Natural killer cell (primary cell): ENCODE measurements at regions of chr21 and their contacts with region 1.

Region 1: DNA sequence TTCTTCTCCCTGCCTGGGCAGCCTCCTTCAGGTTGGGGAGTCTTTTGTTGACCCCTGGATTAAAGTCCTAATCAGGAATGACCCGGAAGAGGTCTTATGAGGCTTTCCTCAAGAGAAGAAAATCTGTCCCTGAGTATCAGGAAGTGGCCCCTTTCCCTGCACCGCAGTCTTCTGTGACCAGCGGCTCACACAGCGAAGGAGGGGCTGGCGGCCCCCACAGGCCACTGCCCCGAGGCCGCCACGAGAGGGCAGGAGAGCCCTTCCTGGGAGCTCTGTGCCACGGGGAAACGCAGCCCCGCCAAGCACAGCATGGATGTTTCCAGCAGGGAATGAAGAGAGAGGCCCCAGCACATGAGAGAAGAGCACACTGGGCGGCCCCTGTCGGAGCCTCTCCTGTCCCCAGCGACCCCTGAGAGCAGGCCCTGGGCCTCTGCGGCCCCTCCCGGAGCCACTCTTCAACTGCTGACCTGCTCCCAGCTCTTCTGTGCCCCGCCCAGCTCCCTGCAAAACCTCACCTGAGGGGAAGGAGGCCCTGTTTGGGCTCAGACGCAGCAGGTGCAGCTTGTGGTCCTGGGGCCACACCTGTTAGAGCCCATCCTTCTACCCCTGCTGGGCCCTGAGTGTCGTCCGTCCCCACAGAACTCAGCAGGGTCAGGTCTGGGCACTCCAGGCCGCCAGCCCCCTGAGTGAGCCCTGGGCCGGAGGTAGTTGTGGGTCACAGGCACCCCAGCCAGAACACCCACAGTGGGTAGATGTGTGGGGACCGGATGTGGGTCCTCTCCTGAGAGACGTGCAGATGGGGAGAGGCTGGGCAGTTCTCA is 4.9 kb upstream of the POFUT2 start:
- DNase-seq: peak; percentile 65 to 84
- ATAC-seq: peak; percentile 65 to 70 (median 67)
- H3K4me3 ChIP-seq: no peak overlapping the region
- H3K4me3 Mint-ChIP-seq: peak overlapping the region; percentile 64
- H3K27ac ChIP-seq: no peak overlapping the region
- H3K27ac Mint-ChIP-seq: peak overlapping the region in 1 of 2 donors; percentile 72
- H3K4me1 ChIP-seq: peaks cover 27% of the 10 kb centered on the region
- H3K4me1 Mint-ChIP-seq: peaks cover 11 to 16% of the 10 kb centered on the region in 2 donors
- H3K27me3 ChIP-seq: no peaks in the 10 kb centered on the region
- H3K27me3 Mint-ChIP-seq: peaks cover 20 to 21% of the 10 kb centered on the region in 2 donors
- CTCF ChIP-seq: peak; percentile 95

Region 2: DNA sequence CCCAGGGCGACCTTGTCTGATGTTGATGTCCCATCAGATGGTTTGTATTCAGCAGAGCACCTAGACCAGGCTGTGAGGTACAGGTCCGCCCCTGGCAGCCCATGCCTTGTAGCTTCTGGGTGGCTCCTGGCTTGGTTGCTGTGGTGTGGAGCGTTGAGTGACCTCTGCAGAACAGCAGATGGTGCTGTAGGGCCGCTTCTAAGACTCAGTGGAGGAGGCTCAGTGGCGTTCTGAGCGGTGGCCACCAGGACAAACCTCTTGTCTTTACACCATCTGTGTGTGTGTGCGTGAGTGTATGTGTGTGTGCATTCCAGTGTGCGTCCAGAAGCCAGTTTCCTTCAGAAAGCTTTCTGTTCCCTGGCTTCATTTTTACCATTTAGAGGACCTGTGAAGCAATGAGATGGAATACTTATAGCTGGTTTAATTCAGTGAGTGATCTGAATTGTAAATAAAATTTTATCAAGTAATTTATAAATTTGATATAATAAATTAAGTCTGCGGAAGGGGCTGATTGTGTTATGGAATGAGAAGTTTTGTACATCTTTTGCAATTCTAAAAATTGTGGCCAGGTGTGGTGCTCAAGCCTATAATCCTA is 152.2 kb before region 1 on chr21:
- intact Hi-C with region 1: loop called (anchors 1 kb)
- DNase-seq: peak; percentile 61 to 80
- ATAC-seq: peak; percentile 93 to 98 (median 98)
- H3K4me3 ChIP-seq: no peak overlapping the region
- H3K4me3 Mint-ChIP-seq: no peak overlapping the region
- H3K27ac ChIP-seq: no peak overlapping the region
- H3K27ac Mint-ChIP-seq: peak overlapping the region in 1 of 2 donors; percentile 42
- H3K4me1 ChIP-seq: peaks cover 5% of the 10 kb centered on the region
- H3K4me1 Mint-ChIP-seq: peaks cover 6 to 9% of the 10 kb centered on the region in 2 donors
- H3K27me3 ChIP-seq: no peaks in the 10 kb centered on the region
- H3K27me3 Mint-ChIP-seq: peaks cover 0 to 2% of the 10 kb centered on the region in 2 donors
- CTCF ChIP-seq: peak; percentile 69

Region 3: DNA sequence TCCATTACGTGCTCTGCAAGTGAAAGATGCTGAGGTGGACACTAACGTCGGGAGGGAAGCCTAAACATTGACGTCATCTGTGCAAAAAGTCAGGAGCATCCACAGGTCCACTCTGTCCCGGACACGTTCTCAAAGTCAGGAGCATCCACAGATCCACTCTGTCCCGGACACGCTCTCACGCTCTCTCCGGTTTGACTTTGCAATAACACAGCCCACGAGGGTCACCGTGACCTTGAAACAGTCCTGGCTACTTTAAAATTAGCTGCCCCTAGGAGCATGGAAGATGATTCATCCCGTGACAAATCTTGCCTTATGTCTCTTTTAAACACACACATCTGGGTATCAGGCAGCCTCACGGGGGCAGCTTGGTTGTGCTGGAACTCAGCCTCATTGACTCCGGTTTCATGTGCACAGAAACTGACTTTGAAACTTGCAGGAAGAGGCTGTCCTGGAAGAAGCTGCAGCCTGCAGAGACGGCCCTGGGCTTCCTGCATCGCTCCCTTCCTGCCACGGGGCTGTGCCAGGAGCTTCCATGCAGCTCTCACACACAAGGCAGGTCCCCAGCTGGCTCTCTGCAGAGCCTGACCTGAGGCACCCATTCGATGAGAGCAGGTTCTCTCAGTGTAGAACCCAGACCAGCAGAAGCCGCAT is 94.2 kb after region 1 on chr21:
- intact Hi-C with region 1: no loop called
- DNase-seq: no peak
- ATAC-seq: no peak
- H3K4me3 ChIP-seq: no peak overlapping the region
- H3K4me3 Mint-ChIP-seq: no peak overlapping the region
- H3K27ac ChIP-seq: no peak overlapping the region
- H3K27ac Mint-ChIP-seq: no peak overlapping the region
- H3K4me1 ChIP-seq: no peaks in the 10 kb centered on the region
- H3K4me1 Mint-ChIP-seq: no peaks in the 10 kb centered on the region
- H3K27me3 ChIP-seq: peaks cover 2% of the 10 kb centered on the region
- H3K27me3 Mint-ChIP-seq: peaks cover 0 to 4% of the 10 kb centered on the region in 2 donors
- CTCF ChIP-seq: no peak

Region 4: DNA sequence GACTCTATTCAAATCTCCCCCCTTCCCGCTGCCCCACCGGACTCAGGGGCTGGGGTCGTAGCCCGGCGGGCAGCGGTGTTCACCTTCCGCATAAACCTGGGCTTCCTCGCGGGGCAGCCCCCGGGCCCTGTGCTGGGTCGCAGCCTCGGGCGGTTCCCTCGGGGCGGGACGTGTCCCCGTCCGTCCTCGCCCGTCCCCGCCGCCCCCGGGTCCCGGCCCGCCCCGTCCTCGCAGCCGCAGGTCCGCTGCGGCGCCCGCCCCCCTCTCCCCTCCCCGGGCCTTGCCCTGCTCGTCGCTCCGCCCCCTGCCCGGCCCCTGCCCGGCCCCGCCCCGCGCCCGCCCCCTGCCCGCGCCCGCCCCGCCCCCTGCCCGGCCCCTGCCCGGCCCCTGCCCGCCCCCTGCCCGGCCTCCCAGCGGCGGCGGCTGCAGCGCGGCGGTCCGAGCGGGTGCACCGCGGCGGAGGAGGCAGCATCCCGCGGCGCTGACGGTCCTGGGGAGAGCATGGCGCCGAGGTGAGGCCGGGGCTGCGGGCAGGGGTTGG is 112.2 kb after region 1 on chr21 and contains the start of gene COL18A1:
- intact Hi-C with region 1: no loop called
- DNase-seq: peak in 1 of 2 donors; percentile 51
- ATAC-seq: peak; percentile 28 to 72 (median 61)
- H3K4me3 ChIP-seq: peak within 1 kb of the TSS; percentile 14
- H3K4me3 Mint-ChIP-seq: peak within 1 kb of the TSS; percentile 87
- H3K27ac ChIP-seq: no peak within 1 kb of the TSS
- H3K27ac Mint-ChIP-seq: peak within 1 kb of the TSS in 1 of 2 donors; percentile 68
- H3K4me1 ChIP-seq: peaks cover 8% of the 10 kb centered on the region
- H3K4me1 Mint-ChIP-seq: peaks cover 13 to 19% of the 10 kb centered on the region in 2 donors
- H3K27me3 ChIP-seq: peaks cover 35% of the 10 kb centered on the region
- H3K27me3 Mint-ChIP-seq: peaks cover 52 to 54% of the 10 kb centered on the region in 2 donors
- CTCF ChIP-seq: no peak
- total RNA-seq, gene COL18A1: 12.3 to 22.3 (median 12.7) TPM

Region 5: DNA sequence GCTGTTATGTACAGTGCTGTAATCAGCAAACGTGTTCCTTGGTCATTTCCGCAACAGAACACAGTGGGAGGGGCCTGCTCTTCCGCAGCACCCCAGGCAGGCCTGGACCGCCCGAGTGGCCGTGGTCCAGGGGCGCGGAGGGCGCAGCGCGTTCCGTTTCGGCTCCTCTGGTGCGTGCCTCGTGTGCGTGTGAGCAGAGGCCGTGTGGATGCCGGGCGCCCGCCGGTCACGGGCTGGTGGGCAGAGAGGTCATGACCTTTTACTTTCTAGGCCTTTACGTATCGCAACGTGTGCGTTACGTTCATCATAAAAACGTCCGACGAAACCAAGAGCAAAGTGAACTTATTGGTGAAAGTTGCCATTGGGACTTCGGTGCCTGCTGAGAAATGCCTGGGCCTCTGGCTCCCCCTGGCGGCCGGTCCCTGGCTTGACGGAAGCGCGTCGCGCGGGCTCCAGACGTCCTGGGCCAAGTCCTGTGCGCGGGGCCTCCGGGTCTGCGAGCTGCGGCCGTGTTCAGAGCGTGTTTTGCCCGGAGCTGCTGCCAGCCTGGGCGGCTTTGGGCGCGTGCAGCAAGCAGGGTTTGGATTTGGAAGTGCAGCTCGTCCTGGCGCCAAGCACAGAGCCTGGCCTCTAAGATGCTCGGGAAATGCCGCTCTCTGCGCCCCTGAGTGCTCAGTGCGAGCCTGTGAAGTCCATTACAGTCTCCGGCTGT is 146.7 kb after region 1 on chr21:
- intact Hi-C with region 1: loop called (anchors 1 kb)
- DNase-seq: peak; percentile 84 to 92
- ATAC-seq: peak; percentile 88 to 92 (median 90)
- H3K4me3 ChIP-seq: no peak overlapping the region
- H3K4me3 Mint-ChIP-seq: peak overlapping the region; percentile 78
- H3K27ac ChIP-seq: no peak overlapping the region
- H3K27ac Mint-ChIP-seq: peak overlapping the region; percentile 45 to 57
- H3K4me1 ChIP-seq: peaks cover 9% of the 10 kb centered on the region
- H3K4me1 Mint-ChIP-seq: peaks cover 8 to 15% of the 10 kb centered on the region in 2 donors
- H3K27me3 ChIP-seq: no peaks in the 10 kb centered on the region
- H3K27me3 Mint-ChIP-seq: peaks cover 4 to 12% of the 10 kb centered on the region in 2 donors
- CTCF ChIP-seq: peak; percentile 94

Region 6: GRCh38 chr21:45596704-45597318 is 304.2 kb after region 1 on chr21:
- intact Hi-C with region 1: loop called (anchors 10 kb)
- DNase-seq: peak; percentile 77 to 93
- ATAC-seq: peak; percentile 85 to 92 (median 86)
- H3K4me3 ChIP-seq: no peak overlapping the region
- H3K4me3 Mint-ChIP-seq: no peak overlapping the region
- H3K27ac ChIP-seq: no peak overlapping the region
- H3K27ac Mint-ChIP-seq: no peak overlapping the region
- H3K4me1 ChIP-seq: peaks cover 8% of the 10 kb centered on the region
- H3K4me1 Mint-ChIP-seq: peaks cover 7% of the 10 kb centered on the region in 2 donors
- H3K27me3 ChIP-seq: no peaks in the 10 kb centered on the region
- H3K27me3 Mint-ChIP-seq: peaks cover 12 to 18% of the 10 kb centered on the region in 2 donors
- CTCF ChIP-seq: peak; percentile 88